Colonic mucosa (tissue), 4 donors: ENCODE measurements at regions of chr12 and their contacts with region 1.

Region 1: GRCh38 chr12:93569656-93570551 is 2.6 kb upstream of the SOCS2 start:
- DNase-seq: peak; percentile 93
- H3K4me3 ChIP-seq: peak overlapping the region; percentile 71
- H3K27ac ChIP-seq: peak overlapping the region; percentile 93
- H3K4me1 ChIP-seq: no peaks in the 10 kb centered on the region
- H3K27me3 ChIP-seq: no peaks in the 10 kb centered on the region
- CTCF ChIP-seq: peak; percentile 75

Region 2: GRCh38 chr12:93502802-93503623 is 66.9 kb before region 1 on chr12:
- intact Hi-C with region 1: loop called (anchors 10 kb)
- DNase-seq: peak; percentile 52
- H3K4me3 ChIP-seq: no peak overlapping the region
- H3K27ac ChIP-seq: no peak overlapping the region
- H3K4me1 ChIP-seq: no peaks in the 10 kb centered on the region
- H3K27me3 ChIP-seq: no peaks in the 10 kb centered on the region
- CTCF ChIP-seq: peak; percentile 76

Region 3: GRCh38 chr12:93677195-93678064 is 107.5 kb after region 1 on chr12 and contains the start of gene CRADD:
- intact Hi-C with region 1: loop called (anchors 5 kb)
- DNase-seq: peak; percentile 84
- H3K4me3 ChIP-seq: peak within 1 kb of the TSS; percentile 52
- H3K27ac ChIP-seq: peak within 1 kb of the TSS; percentile 97
- H3K4me1 ChIP-seq: no peaks in the 10 kb centered on the region
- H3K27me3 ChIP-seq: no peaks in the 10 kb centered on the region
- CTCF ChIP-seq: no peak
- total RNA-seq, gene CRADD: 18.2 to 23.9 TPM

Region 4: DNA sequence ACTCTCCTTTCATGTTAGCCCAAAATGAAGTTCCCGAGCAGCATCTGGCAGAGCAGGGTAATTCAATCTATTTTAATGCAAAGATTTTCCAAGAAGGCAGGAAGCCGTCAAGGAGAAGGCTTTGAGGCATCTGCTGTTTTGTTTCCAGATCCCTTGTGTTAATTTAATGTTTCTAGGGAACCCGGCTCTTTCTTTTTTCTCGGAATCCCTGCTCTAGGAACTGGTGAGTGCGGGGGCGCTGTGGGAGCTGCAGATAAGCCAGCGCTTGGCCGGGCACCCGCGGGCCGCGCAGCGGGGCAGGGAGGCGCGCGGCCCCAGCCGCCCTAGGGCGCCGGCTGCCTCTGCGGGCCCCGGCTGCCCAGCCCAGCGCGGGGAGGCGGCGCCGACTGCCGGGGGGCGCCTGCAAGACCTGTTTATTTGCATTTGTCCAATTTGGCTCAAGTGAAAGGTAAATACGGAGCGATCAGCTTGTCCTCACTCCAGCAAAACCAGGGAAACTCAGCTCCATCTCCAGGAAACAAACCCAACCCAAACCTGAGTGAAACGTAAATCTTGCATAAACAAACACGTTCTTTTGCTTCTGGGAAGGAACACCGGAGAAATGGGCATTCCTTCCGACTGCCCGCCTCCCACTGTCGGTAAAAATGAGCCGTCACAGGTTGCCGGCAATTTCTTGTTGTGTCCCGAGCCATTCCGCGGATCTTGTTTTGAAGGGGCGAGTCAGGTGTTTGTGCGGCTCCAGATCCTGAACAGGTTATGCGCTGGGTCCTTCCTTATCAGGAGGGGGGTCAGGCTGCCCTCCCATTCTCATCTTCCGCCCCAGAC is 172.4 kb after region 1 on chr12:
- intact Hi-C with region 1: loop called (anchors 2 kb)
- DNase-seq: peak; percentile 62
- H3K4me3 ChIP-seq: peak overlapping the region; percentile 56
- H3K27ac ChIP-seq: peak overlapping the region; percentile 84
- H3K4me1 ChIP-seq: no peaks in the 10 kb centered on the region
- H3K27me3 ChIP-seq: no peaks in the 10 kb centered on the region
- CTCF ChIP-seq: no peak

Region 5: GRCh38 chr12:93766796-93767523 is 197.1 kb after region 1 on chr12:
- intact Hi-C with region 1: loop called (anchors 10 kb)
- DNase-seq: peak; percentile 40
- H3K4me3 ChIP-seq: no peak overlapping the region
- H3K27ac ChIP-seq: peak overlapping the region; percentile 6
- H3K4me1 ChIP-seq: no peaks in the 10 kb centered on the region
- H3K27me3 ChIP-seq: no peaks in the 10 kb centered on the region
- CTCF ChIP-seq: peak; percentile 50

Region 6: GRCh38 chr12:93979189-93979588 is 409.3 kb after region 1 on chr12:
- intact Hi-C with region 1: loop called (anchors 5 kb)
- DNase-seq: peak; percentile 36
- H3K4me3 ChIP-seq: no peak overlapping the region
- H3K27ac ChIP-seq: no peak overlapping the region
- H3K4me1 ChIP-seq: no peaks in the 10 kb centered on the region
- H3K27me3 ChIP-seq: no peaks in the 10 kb centered on the region
- CTCF ChIP-seq: peak; percentile 47

Region 7: DNA sequence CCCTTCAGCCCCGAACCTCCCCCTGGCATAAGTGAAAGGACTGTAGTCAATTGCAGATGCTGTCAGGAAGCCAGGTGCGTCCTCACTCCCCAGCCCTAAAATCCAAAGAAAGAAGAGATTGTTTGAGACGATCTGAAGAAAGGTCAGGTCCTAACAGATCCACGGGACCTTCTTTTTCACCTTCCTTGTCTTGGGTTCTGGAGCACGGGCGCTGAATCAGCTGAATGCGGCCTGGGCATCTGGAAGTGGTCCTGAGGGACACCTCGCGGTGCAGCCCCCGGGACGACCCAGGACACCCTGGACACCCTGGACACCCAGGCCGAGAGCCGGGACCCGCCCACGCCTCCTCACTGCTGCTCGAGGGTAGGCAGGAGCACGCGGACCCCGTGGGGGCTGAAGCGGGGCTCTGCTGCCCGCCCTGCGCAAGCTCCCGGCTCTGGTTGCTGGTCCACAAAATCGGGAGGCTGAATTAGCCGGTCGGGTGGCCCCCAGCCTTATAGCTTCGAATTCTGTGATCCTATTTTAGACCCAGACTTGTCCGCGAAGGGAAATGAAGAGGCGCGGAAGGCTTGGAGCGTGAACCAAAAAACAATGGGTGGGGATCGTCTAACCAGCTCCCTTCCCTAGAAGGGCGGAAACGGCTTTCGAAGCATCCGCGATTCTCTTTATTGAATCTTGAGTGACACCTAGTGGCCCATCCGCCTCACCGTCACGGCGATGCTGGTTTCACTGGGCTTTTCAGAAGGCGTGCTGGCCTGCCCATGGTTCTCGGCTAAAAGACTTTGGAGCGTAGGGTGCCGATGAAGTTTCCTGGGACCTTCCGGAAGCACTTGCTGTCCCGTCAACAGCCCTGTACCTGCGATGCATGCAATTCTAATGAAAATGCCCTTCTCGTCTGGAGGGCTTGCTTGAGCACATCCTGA is 532.1 kb after region 1 on chr12:
- intact Hi-C with region 1: loop called (anchors 2 kb)
- DNase-seq: peak; percentile 91
- H3K4me3 ChIP-seq: peak overlapping the region; percentile 53
- H3K27ac ChIP-seq: no peak overlapping the region
- H3K4me1 ChIP-seq: no peaks in the 10 kb centered on the region
- H3K27me3 ChIP-seq: no peaks in the 10 kb centered on the region
- CTCF ChIP-seq: peak; percentile 75